CD4-positive, alpha-beta T cell (primary cell): ENCODE measurements at regions of chr16 and their contacts with region 1.

Region 1: DNA sequence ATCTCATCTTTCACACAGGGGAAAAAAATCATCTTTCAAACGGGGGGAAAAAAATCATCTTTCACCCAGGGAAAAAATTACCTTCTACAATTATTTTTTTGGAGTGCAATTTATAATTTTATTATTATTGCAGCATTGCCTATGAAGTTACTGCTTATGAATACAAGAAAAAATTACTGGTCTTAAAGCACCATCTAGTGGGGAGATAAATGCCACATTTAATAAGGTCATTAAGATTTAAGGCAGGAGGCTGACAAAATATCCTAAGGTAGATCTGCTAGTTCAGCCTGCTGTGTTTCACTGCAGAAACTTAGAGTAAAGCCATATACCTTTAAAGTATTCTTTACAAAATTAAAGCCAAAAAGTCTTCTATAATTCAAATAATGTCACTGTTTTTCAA is 13.7 kb downstream of the SHCBP1 start:
- DNase-seq: peak in 3 of 14 experiments; percentile 61 to 63 (median 62)
- ATAC-seq: no peak
- H3K4me3 ChIP-seq: no peak overlapping the region
- H3K4me3 Mint-ChIP-seq: no peak overlapping the region
- H3K27ac ChIP-seq: no peak overlapping the region
- H3K27ac Mint-ChIP-seq: no peak overlapping the region
- H3K4me1 ChIP-seq: peaks cover 8% of the 10 kb centered on the region
- H3K4me1 Mint-ChIP-seq: no peaks in the 10 kb centered on the region
- H3K27me3 ChIP-seq: no peaks in the 10 kb centered on the region
- H3K27me3 Mint-ChIP-seq: no peaks in the 10 kb centered on the region
- CTCF ChIP-seq: peak; percentile 62

Region 2: DNA sequence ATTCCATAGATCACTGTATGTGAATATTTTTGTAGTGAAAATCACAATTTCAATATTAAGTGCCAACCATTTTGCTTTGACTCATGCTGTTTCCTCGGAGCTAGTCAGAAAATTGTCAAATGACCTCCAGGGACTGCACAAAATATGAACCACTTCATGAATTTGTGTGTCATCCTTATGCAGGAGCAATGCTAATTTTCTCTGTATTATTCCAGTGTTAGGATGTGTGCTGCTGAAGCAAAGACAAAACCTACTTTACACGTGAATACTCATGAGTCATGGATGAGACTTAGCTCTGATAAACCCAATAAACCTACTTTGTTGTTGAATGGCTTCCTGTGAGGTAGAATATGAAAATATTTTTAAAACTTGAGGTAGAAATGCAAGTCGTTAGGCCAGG is 51.6 kb before region 1 on chr16:
- CTCF ChIA-PET with region 1: interaction called, 4 read pairs
- POLR2A ChIA-PET with region 1: interaction called, 3 read pairs
- intact Hi-C with region 1: loop called (anchors 1 kb)
- DNase-seq: no peak
- ATAC-seq: no peak
- H3K4me3 ChIP-seq: no peak overlapping the region
- H3K4me3 Mint-ChIP-seq: no peak overlapping the region
- H3K27ac ChIP-seq: no peak overlapping the region
- H3K27ac Mint-ChIP-seq: no peak overlapping the region
- H3K4me1 ChIP-seq: no peaks in the 10 kb centered on the region
- H3K4me1 Mint-ChIP-seq: no peaks in the 10 kb centered on the region
- H3K27me3 ChIP-seq: peaks cover 0 to 4% of the 10 kb centered on the region in 2 experiments
- H3K27me3 Mint-ChIP-seq: peaks cover 20% of the 10 kb centered on the region
- CTCF ChIP-seq: no peak

Region 3: GRCh38 chr16:46591257-46591656 is 16.3 kb before region 1 on chr16:
- CTCF ChIA-PET with region 1: no interaction called
- POLR2A ChIA-PET with region 1: no interaction called
- intact Hi-C with region 1: no loop called
- DNase-seq: no peak
- ATAC-seq: no peak
- H3K4me3 ChIP-seq: no peak overlapping the region
- H3K4me3 Mint-ChIP-seq: no peak overlapping the region
- H3K27ac ChIP-seq: no peak overlapping the region
- H3K27ac Mint-ChIP-seq: no peak overlapping the region
- H3K4me1 ChIP-seq: no peaks in the 10 kb centered on the region
- H3K4me1 Mint-ChIP-seq: no peaks in the 10 kb centered on the region
- H3K27me3 ChIP-seq: no peaks in the 10 kb centered on the region
- H3K27me3 Mint-ChIP-seq: no peaks in the 10 kb centered on the region
- CTCF ChIP-seq: no peak

Region 4: GRCh38 chr16:46649928-46650623 is 42.5 kb after region 1 on chr16:
- CTCF ChIA-PET with region 1: no interaction called
- POLR2A ChIA-PET with region 1: no interaction called
- intact Hi-C with region 1: no loop called
- DNase-seq: no peak
- ATAC-seq: no peak
- H3K4me3 ChIP-seq: no peak overlapping the region
- H3K4me3 Mint-ChIP-seq: no peak overlapping the region
- H3K27ac ChIP-seq: no peak overlapping the region
- H3K27ac Mint-ChIP-seq: no peak overlapping the region
- H3K4me1 ChIP-seq: no peaks in the 10 kb centered on the region
- H3K4me1 Mint-ChIP-seq: no peaks in the 10 kb centered on the region
- H3K27me3 ChIP-seq: no peaks in the 10 kb centered on the region
- H3K27me3 Mint-ChIP-seq: no peaks in the 10 kb centered on the region
- CTCF ChIP-seq: no peak